ENCODE measurements at regions of chr10 and their contacts with region 1.

Region 1: GRCh38 chr10:7818295-7819122 is at the start of gene TAF3:
- DNase-seq: peak; percentile 76 to 86 (median 78)
- H3K4me3 ChIP-seq: peak within 1 kb of the TSS; percentile 64 to 99 (median 89)
- H3K4me3 Mint-ChIP-seq: peak within 1 kb of the TSS; percentile 92 to 99
- H3K27ac ChIP-seq: peak within 1 kb of the TSS in 1 of 2 donors; percentile 82
- H3K27ac Mint-ChIP-seq: peak within 1 kb of the TSS; percentile 68 to 94 (median 86)
- H3K4me1 ChIP-seq: peaks cover 20 to 22% of the 10 kb centered on the region in 2 donors
- H3K4me1 Mint-ChIP-seq: peaks cover 29% of the 10 kb centered on the region
- H3K27me3 ChIP-seq: no peaks in the 10 kb centered on the region
- H3K27me3 Mint-ChIP-seq: peaks cover 2 to 6% (median 4%) of the 10 kb centered on the region in 3 donors
- CTCF ChIP-seq: no peak
- polyA plus RNA-seq, gene TAF3: 1.6 to 3.9 (median 3.4) TPM

Region 2: DNA sequence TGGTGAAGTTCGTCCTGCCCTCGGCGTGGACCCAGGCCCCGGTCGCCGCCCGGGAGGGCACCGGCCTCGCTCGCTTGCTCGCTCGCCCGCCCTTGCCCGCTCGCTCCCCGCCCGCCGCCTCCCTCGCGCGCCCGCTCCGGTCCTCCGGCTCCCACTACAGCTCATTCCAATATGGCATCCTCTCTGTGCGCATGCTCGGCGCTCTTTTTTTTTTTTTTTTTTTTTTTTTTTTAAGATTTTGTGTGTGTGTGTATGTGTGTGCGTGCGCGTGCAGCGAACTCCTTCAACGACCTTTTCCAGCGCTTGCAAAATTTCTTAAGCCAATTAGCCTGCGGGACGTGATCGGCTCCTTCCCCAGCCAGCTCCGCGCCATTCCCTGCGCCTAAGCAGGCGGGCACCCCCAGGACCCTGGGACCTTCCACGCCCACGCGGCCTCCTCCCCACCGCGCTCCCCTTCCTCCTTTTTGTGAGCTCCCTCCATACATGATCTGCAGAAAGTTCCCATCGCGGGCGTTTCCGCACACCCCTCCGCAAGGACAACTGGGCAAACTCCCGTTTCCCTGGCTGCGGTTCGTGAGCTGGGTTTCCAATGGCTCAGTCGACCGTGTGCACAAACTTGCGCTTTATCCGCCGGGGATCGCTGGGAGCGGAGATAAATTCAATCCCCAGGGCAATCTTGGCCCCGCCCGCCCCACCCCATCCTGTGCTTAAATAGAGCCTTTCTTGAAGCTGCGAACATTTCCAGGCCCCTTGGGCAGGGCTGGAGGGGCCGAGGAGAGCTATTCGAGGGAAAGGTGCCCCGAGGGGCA is 407.4 kb before region 1 on chr10 and contains the start of gene SFMBT2:
- intact Hi-C with region 1: no loop called
- DNase-seq: peak; percentile 60 to 70 (median 66)
- H3K4me3 ChIP-seq: peak within 1 kb of the TSS; percentile 76 to 91 (median 81)
- H3K4me3 Mint-ChIP-seq: peak within 1 kb of the TSS; percentile 98
- H3K27ac ChIP-seq: no peak within 1 kb of the TSS
- H3K27ac Mint-ChIP-seq: peak within 1 kb of the TSS; percentile 25 to 88 (median 58)
- H3K4me1 ChIP-seq: peaks cover 49 to 61% of the 10 kb centered on the region in 2 donors
- H3K4me1 Mint-ChIP-seq: peaks cover 52% of the 10 kb centered on the region
- H3K27me3 ChIP-seq: peaks cover 17 to 39% of the 10 kb centered on the region in 2 donors
- H3K27me3 Mint-ChIP-seq: peaks cover 31 to 63% (median 57%) of the 10 kb centered on the region in 3 donors
- CTCF ChIP-seq: no peak
- polyA plus RNA-seq, gene SFMBT2: 0.53 to 10.9 (median 1.6) TPM

Region 3: GRCh38 chr10:7787857-7788638 is 30.5 kb before region 1 on chr10 and contains the starts of genes ATP5F1C and KIN:
- intact Hi-C with region 1: loop called (anchors 2 kb)
- DNase-seq: peak; percentile 96 to 98 (median 97)
- H3K4me3 ChIP-seq: peak within 1 kb of the TSS; percentile 87 to 94 (median 88)
- H3K4me3 Mint-ChIP-seq: no peak within 1 kb of the TSS
- H3K27ac ChIP-seq: peak within 1 kb of the TSS; percentile 80 to 91
- H3K27ac Mint-ChIP-seq: no peak within 1 kb of the TSS
- H3K4me1 ChIP-seq: peaks cover 27 to 34% of the 10 kb centered on the region in 2 donors
- H3K4me1 Mint-ChIP-seq: peaks cover 52% of the 10 kb centered on the region
- H3K27me3 ChIP-seq: no peaks in the 10 kb centered on the region
- H3K27me3 Mint-ChIP-seq: no peaks in the 10 kb centered on the region
- CTCF ChIP-seq: no peak
- polyA plus RNA-seq, gene ATP5F1C: 179 to 455 (median 437) TPM
- polyA plus RNA-seq, gene KIN: 3.0 to 4.6 (median 3.1) TPM